ENCODE measurements at regions of chr2 and their contacts with region 1.

Region 1: DNA sequence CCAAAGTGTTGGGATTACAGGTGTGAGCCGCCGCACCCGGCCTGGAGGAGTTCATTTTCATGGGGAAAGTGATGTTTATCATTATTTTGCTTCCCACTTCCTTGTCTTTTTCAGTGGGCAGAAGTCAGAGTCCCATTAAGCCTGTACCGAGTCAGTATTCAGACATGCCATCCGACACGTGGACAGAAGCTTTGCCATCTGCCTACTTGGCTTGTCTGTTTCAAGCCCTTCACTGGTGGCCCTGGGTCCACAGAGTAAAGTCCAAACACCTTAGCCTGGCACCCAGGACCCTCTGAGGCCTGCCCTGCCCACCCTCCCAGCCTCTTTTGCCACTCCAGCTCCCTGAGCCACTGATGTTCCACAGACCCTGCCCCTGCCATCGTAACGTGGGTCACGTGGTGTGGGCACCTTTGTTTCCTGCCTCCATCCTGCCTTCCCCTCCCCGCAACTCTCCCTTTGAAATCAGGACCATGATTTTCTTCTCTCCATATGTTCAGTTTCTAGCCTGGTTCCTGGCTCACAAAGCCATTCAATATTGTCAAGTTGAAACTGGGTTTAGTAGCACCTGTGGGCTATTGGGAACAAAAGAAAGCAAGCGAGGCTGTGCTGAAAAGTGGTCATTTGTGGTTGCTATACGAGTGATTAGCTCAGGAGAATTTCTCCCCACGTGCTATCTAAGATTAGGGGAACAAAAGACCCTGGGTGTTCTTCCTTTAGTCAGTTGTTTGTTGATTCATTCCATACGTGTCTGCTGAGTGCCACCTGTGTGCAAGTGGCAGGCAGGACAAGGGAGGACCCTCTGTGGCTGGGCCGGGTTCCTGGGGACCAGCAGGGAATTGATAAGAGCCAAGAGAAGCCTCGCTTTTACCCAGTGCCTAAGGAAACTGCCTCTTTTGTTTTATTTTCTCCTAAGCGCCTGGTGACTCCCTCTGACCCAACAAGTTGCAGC is 5.1 kb upstream of the ODC1 start:
- DNase-seq: no peak
- ATAC-seq: no peak
- H3K4me3 ChIP-seq: no peak overlapping the region
- H3K27ac ChIP-seq: peak overlapping the region; percentile 62
- H3K4me1 ChIP-seq: peaks cover 60% of the 10 kb centered on the region
- H3K27me3 ChIP-seq: no peaks in the 10 kb centered on the region
- CTCF ChIP-seq: no peak

Region 2: GRCh38 chr2:10575609-10576280 is 122.5 kb after region 1 on chr2:
- CTCF ChIA-PET with region 1: no interaction called
- POLR2A ChIA-PET with region 1: interaction called, 4 read pairs
- intact Hi-C with region 1: loop called (anchors 2 kb)
- DNase-seq: peak; percentile 94
- ATAC-seq: peak; percentile 91
- H3K4me3 ChIP-seq: 0 out of 2 replicates have a peak overlapping the region, but pooled peaks have one; percentile 3
- H3K27ac ChIP-seq: peak overlapping the region; percentile 97
- H3K4me1 ChIP-seq: peaks cover 27% of the 10 kb centered on the region
- H3K27me3 ChIP-seq: no peaks in the 10 kb centered on the region
- CTCF ChIP-seq: no peak

Region 3: DNA sequence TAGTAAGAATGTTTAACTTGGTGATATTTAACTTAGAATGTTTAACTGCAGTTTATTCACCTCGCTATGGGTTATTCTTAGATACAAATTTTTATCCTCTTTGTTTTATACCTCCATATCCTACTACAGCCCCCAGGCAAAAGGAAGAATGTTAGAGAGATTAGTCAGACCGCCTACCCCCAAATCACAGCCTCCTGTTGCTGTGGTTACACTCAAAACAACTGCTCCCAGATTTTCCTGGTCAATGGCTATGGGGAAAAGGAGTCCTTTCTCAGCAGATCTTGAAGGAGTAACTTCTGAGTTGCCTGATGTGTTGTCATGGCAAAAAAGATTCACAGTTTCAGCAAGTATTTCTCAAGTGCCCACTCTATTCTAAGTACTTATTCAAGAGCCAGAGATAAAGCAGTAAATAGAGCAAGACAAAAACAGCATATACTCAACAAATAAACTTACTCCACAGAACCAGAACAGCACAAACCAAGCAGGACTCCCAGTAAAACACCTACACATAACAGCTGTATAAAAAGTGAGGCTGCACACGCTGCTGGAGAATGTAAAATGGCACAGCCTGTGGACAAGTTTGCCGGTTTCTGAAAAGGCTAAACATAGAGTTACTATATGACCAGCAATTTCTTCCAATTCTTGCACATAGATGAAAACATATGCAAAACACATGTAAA is 131.7 kb after region 1 on chr2:
- CTCF ChIA-PET with region 1: no interaction called
- POLR2A ChIA-PET with region 1: no interaction called
- intact Hi-C with region 1: loop called (anchors 1 kb)
- DNase-seq: peak; percentile 97
- ATAC-seq: peak; percentile 84
- H3K4me3 ChIP-seq: peak overlapping the region; percentile 40
- H3K27ac ChIP-seq: peak overlapping the region; percentile 97
- H3K4me1 ChIP-seq: peaks cover 37% of the 10 kb centered on the region
- H3K27me3 ChIP-seq: no peaks in the 10 kb centered on the region
- CTCF ChIP-seq: no peak

Region 4: GRCh38 chr2:10668402-10669012 is 215.3 kb after region 1 on chr2:
- CTCF ChIA-PET with region 1: no interaction called
- POLR2A ChIA-PET with region 1: no interaction called
- intact Hi-C with region 1: loop called (anchors 2 kb)
- DNase-seq: peak; percentile 87
- ATAC-seq: peak; percentile 63; the same call in 1 of the 2 replicates
- H3K4me3 ChIP-seq: no peak overlapping the region
- H3K27ac ChIP-seq: no peak overlapping the region
- H3K4me1 ChIP-seq: no peaks in the 10 kb centered on the region
- H3K27me3 ChIP-seq: no peaks in the 10 kb centered on the region
- CTCF ChIP-seq: peak; percentile 73